ENCODE measurements at regions of chr6 and their contacts with region 1.

Region 1: DNA sequence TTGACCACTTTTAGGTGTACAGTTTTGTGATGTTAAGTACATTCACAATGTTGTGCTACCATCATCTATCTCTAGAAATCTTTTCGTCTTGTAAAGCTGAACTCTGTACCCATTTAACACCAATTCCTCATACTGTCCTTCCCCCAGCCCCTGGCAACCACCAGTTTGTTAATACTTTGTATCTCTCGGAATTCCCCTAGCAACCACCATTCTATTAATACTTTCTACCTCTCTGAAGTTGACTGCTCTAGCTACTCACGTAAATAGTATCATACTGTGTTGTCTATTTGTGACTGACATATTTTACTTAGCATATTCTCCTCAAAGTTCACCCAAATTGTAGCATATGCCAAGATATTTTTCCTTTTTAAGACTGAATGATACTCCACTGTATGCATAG is 82.3 kb upstream of the CLDN20 start:
- DNase-seq: no peak

Region 2: DNA sequence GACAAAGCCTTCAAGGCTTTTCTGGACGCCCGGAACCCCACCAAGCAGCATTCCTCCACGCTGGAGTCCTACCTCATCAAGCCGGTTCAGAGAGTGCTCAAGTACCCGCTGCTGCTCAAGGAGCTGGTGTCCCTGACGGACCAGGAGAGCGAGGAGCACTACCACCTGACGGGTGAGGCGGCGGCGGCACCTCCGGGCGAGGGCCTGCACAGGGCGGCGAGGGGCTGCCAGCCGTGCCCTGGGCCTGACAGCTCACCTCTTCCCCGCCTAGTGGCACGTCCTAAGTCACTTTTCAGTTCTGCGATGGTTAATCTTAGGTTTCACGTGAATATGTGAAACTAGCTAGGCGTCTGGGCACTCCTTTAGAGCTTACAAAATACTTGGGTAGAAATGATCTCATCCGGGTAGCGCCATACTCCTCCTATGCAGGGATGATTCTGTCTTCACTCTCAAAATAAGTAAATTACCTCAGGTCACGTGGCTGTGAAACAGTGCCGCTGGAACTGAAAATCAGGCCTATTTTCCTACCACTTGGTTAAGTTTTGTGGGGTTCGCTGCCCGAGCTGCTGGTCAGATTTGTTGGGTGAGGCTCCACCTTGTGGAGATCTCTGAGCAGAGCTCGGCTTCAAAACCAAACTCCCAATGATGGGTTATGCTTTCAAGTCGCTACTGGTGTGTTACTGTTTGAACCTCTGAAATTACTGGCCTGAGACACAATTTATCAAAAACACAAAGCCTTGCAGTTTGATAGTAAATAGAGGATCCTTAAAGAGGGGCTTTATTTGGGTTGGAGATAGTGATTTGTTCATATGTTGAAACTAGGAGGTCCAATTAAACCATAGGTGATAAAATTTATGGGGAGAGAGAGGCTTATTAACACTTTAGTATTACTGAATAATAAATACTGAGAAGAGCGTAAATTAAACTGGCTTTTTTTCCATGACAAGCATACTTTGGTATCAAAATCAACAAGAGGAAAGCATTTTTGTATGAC is 66.8 kb after region 1 on chr6:
- intact Hi-C with region 1: loop called (anchors 5 kb)
- DNase-seq: no peak